ENCODE measurements at regions of chr4 and their contacts with region 1.

Region 1: DNA sequence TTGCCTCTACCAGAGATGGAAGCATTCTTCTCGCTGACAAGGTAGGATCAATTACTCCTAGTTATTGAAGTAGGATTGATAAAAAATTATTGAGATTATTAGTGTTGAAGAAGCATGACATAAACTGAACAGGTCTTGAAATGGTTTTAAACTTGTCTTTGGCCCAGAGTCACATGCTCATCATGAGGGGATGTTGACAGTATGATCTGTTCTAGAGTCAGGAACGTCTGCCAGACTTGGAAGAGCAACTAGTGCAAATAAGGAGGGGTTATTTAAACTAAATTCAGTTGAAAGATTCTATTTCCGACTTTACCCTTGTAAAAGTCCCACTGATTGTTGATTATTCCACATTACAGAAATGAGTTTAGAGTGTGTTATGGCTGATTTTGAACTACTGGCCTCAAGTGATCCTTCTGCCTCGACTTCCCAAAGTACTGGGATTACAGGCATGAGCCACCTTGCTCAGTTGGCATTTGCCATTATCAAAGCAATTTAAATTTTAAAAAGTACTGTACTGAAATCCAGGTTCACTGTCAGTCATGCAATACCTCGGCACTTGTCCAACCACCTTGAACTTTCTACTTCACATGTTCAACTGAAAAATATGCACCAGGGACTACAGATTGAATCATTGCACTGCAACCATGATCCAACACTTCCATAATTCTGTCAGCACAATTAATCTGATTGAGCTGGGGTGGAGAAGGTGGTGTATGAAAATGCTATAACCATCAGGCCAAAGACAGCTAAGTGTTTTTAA is 19.7 kb downstream of the FABP2 start:
- DNase-seq: no peak
- H3K4me3 ChIP-seq: no peak overlapping the region
- H3K27ac ChIP-seq: peak overlapping the region in 1 of 2 donors; percentile 10
- H3K4me1 ChIP-seq: no peaks in the 10 kb centered on the region
- H3K27me3 ChIP-seq: no peaks in the 10 kb centered on the region
- CTCF ChIP-seq: no peak
- POLR2A ChIP-seq: no peak

Region 2: GRCh38 chr4:118712872-118713271 is 589.4 kb before region 1 on chr4:
- intact Hi-C with region 1: no loop called
- DNase-seq: no peak
- H3K4me3 ChIP-seq: no peak overlapping the region
- H3K27ac ChIP-seq: no peak overlapping the region
- H3K4me1 ChIP-seq: no peaks in the 10 kb centered on the region
- H3K27me3 ChIP-seq: no peaks in the 10 kb centered on the region
- CTCF ChIP-seq: no peak
- POLR2A ChIP-seq: no peak

Region 3: DNA sequence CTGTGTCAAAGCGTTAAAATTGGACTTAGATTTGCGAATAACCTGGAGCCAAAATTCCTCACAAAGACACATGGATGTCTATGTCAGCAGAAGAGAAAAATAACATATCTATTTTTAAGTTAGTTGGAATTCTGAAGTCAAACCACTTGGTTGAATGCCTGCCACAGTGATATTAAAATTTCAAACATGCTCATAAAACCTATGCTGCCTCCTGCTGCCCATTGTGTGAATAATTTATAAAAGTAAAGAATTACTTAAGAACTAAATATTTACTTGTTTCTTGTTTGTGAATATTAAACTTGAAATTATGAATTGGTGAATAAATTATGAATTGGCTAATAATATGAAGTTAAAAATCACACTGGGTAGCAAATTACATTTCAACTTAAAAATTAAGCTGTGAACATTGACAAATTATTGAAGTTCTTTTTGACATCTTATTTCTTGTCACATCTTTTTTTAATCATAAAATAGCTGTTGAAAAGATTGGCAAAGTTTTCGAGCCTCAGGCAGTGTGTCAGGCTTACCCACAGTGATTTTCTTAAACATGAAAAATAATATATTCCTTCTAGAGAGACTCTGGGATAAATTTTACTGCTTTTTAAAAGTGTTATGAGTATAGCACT is 15.8 kb before region 1 on chr4:
- intact Hi-C with region 1: loop called (anchors 2 kb)
- DNase-seq: no peak
- H3K4me3 ChIP-seq: no peak overlapping the region
- H3K27ac ChIP-seq: no peak overlapping the region
- H3K4me1 ChIP-seq: no peaks in the 10 kb centered on the region
- H3K27me3 ChIP-seq: no peaks in the 10 kb centered on the region
- CTCF ChIP-seq: peak; percentile 43 to 74 (median 67)
- POLR2A ChIP-seq: no peak